ENCODE measurements at regions of chr17 and their contacts with region 1.

Region 1: GRCh38 chr17:29111816-29112499 is 68.2 kb downstream of the MYO18A start:
- DNase-seq: no peak
- H3K4me3 ChIP-seq: no peak overlapping the region
- CTCF ChIP-seq: peak; percentile 98

Region 2: GRCh38 chr17:28951991-28952975 is 159.7 kb before region 1 on chr17:
- CTCF ChIA-PET with region 1: interaction called, 1,065 read pairs
- POLR2A ChIA-PET with region 1: no interaction called
- DNase-seq: peak; percentile 96
- H3K4me3 ChIP-seq: peak overlapping the region; percentile 76
- CTCF ChIP-seq: no peak

Region 3: DNA sequence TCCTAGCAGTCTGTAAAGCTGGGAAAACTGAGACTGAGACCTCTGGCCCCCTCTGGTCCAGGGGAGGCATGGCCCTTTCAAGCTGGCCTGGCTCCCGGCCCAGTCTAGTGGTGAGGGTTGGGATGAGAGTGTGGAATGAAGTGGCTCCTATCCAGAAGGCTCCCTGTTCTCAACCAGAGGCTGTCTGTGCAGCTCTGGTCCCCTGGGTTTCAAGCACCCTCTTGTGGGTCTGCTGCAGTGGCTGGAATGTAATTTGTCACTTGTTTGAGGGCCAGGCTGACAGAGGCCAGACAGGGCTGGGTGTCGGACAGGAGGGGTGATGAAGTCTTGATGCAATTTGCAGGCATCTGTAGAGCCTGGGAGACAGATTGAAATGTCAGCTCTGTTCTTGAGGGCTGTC is 138.5 kb before region 1 on chr17:
- CTCF ChIA-PET with region 1: interaction called, 390 read pairs
- POLR2A ChIA-PET with region 1: no interaction called
- DNase-seq: no peak
- H3K4me3 ChIP-seq: no peak overlapping the region
- CTCF ChIP-seq: peak; percentile 9

Region 4: GRCh38 chr17:29005936-29006511 is 105.9 kb before region 1 on chr17 and contains the start of gene SEZ6:
- CTCF ChIA-PET with region 1: interaction called, 25 read pairs
- POLR2A ChIA-PET with region 1: no interaction called
- DNase-seq: no peak
- H3K4me3 ChIP-seq: no peak within 1 kb of the TSS
- CTCF ChIP-seq: no peak

Region 5: GRCh38 chr17:29054835-29055234 is 57.1 kb before region 1 on chr17:
- CTCF ChIA-PET with region 1: interaction called, 13 read pairs
- POLR2A ChIA-PET with region 1: no interaction called
- DNase-seq: no peak
- H3K4me3 ChIP-seq: no peak overlapping the region
- CTCF ChIP-seq: no peak

Region 6: GRCh38 chr17:29084541-29085146 is 27.3 kb before region 1 on chr17:
- CTCF ChIA-PET with region 1: interaction called, 15 read pairs
- POLR2A ChIA-PET with region 1: no interaction called
- DNase-seq: no peak
- H3K4me3 ChIP-seq: no peak overlapping the region
- CTCF ChIP-seq: no peak

Region 7: GRCh38 chr17:29140051-29140621 is 28.2 kb after region 1 on chr17:
- CTCF ChIA-PET with region 1: interaction called, 411 read pairs
- POLR2A ChIA-PET with region 1: interaction called, 3 read pairs
- DNase-seq: no peak
- H3K4me3 ChIP-seq: peak overlapping the region; percentile 49
- CTCF ChIP-seq: no peak

Region 8: DNA sequence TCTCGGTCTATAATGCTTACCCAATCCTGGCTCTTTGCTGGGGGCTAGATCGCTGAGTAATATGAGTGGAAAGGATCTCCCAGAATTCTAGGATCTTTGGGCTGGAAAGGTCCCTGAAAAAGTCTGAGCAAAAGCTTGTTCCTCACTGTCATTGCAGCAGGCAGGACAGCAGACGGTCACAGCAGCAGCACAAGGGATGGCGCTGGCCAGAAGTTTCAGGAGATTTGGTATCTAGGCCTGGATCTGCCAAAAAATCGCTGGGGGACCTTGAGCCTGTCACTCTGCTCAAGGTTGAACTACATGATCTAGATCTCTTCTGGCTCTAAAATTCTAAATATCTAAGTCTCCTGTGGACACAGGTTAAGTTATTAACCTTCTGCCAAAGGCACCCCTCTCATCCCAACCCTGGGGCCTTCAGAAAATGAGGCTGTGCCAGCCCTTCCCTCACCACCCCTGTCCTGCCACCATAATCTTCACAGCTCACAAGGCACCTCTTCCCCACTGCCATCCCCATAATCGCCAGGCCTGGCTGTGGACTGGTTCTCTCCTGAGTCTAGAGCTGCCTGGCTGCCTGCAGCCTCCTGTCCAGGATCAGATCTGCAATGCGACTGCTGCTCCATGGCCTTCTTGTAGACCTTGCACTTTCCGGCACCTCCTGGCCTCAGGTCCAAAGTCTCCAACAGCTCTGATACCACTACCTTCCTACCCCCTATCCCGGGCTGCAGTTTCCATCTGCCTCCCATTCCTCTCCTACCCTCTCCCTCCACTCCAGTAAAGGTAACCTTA is 58.0 kb after region 1 on chr17:
- CTCF ChIA-PET with region 1: no interaction called
- POLR2A ChIA-PET with region 1: no interaction called
- DNase-seq: no peak
- H3K4me3 ChIP-seq: no peak overlapping the region
- CTCF ChIP-seq: no peak

Region 9: GRCh38 chr17:29273924-29274323 is 162.0 kb after region 1 on chr17:
- CTCF ChIA-PET with region 1: no interaction called
- POLR2A ChIA-PET with region 1: no interaction called
- DNase-seq: no peak
- H3K4me3 ChIP-seq: no peak overlapping the region
- CTCF ChIP-seq: no peak

Measured in AG04449 (cell line).